ENCODE measurements at regions of chr11 and their contacts with region 1.

Region 1: DNA sequence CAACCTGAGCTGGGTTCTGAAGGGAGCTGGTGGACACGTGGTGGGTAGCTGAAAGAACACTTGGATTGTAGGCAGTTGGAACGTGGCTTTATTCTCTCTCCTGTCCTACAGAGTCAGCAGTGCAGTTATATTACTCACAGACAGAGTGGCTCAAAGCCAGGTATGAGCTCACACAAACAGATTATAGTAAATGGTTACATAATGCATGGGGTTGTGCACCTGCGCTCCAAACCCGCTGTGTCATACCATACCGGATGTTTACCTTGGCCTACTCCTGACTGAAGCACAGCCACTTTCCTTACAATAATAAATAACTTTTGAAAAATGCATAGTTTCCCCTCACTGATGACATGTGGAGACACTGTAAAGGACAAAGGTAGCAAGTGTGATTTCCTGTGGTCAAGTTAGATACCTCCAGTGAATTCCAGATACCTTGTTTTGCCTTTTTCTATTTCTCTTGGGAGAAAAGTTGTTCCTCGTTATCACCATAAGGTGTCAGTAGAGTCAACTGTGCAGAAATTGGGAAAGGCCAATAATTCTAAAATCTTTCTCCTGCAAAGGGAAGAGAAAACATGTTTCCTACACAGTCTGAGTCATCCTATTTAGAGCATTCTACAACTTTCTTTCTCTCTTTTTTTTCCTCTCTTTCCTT is 13.5 kb downstream of the MS4A6A start:
- DNase-seq: peak in 1 of 2 experiments; percentile 18
- H3K4me3 ChIP-seq: no peak overlapping the region
- H3K4me3 Mint-ChIP-seq: no peak overlapping the region
- H3K27ac Mint-ChIP-seq: no peak overlapping the region
- H3K4me1 ChIP-seq: no peaks in the 10 kb centered on the region
- H3K4me1 Mint-ChIP-seq: no peaks in the 10 kb centered on the region
- H3K27me3 ChIP-seq: no peaks in the 10 kb centered on the region
- H3K27me3 Mint-ChIP-seq: no peaks in the 10 kb centered on the region
- CTCF ChIP-seq: peak; percentile 28 to 34

Region 2: GRCh38 chr11:60145677-60146076 is 23.7 kb before region 1 on chr11:
- CTCF ChIA-PET with region 1: no interaction called
- POLR2A ChIA-PET with region 1: no interaction called
- intact Hi-C with region 1: no loop called
- DNase-seq: no peak
- H3K4me3 ChIP-seq: no peak overlapping the region
- H3K4me3 Mint-ChIP-seq: no peak overlapping the region
- H3K27ac Mint-ChIP-seq: no peak overlapping the region
- H3K4me1 ChIP-seq: no peaks in the 10 kb centered on the region
- H3K4me1 Mint-ChIP-seq: no peaks in the 10 kb centered on the region
- H3K27me3 ChIP-seq: no peaks in the 10 kb centered on the region
- H3K27me3 Mint-ChIP-seq: peaks cover 5% of the 10 kb centered on the region
- CTCF ChIP-seq: no peak

Region 3: GRCh38 chr11:60193687-60194433 is 24.5 kb after region 1 on chr11:
- CTCF ChIA-PET with region 1: no interaction called
- POLR2A ChIA-PET with region 1: no interaction called
- intact Hi-C with region 1: loop called (anchors 1 kb)
- DNase-seq: peak; percentile 58 to 75
- H3K4me3 ChIP-seq: no peak overlapping the region
- H3K4me3 Mint-ChIP-seq: no peak overlapping the region
- H3K27ac Mint-ChIP-seq: no peak overlapping the region
- H3K4me1 ChIP-seq: no peaks in the 10 kb centered on the region
- H3K4me1 Mint-ChIP-seq: no peaks in the 10 kb centered on the region
- H3K27me3 ChIP-seq: no peaks in the 10 kb centered on the region
- H3K27me3 Mint-ChIP-seq: peaks cover 5% of the 10 kb centered on the region
- CTCF ChIP-seq: peak; percentile 84 to 89

Region 4: DNA sequence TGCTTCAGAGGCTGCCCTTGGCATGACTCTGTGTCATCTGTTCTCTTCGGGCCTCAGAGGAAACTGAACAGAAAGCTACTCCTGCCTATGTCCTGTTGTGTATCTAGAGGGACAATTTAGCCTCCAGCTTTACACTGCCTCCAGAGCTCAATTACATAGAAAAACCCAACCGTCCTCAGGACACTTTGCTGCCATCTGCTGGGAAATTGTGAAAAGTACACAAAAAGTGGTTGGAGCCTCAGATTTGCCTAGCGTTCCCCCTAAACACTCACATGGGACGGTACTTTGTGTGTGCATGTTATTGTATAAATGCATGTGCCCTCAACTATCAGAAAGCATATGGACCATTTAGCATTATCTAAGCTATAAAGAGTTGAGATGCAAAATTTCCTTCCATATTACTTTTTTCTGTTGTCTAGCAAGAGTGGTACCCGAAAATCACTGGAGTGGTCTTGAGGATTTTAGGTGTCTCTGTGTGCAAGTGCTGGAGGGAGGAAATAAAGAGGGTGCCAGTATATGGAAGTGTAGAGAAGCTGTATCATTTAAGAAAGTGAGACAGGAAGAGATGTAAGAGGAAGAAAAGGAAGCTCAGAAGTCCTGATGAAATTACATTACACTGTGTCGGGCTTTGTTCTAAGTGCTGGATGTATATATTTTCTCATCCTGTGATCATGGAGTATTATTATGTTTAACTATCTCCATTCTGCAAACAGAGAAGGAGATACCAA is 82.3 kb after region 1 on chr11:
- CTCF ChIA-PET with region 1: no interaction called
- POLR2A ChIA-PET with region 1: no interaction called
- intact Hi-C with region 1: loop called (anchors 1 kb)
- DNase-seq: peak in 1 of 2 experiments; percentile 13
- H3K4me3 ChIP-seq: no peak overlapping the region
- H3K4me3 Mint-ChIP-seq: no peak overlapping the region
- H3K27ac Mint-ChIP-seq: no peak overlapping the region
- H3K4me1 ChIP-seq: no peaks in the 10 kb centered on the region
- H3K4me1 Mint-ChIP-seq: no peaks in the 10 kb centered on the region
- H3K27me3 ChIP-seq: no peaks in the 10 kb centered on the region
- H3K27me3 Mint-ChIP-seq: peaks cover 6% of the 10 kb centered on the region
- CTCF ChIP-seq: peak; percentile 21 to 26